ENCODE measurements at regions of chr16 and their contacts with region 1.

Region 1: DNA sequence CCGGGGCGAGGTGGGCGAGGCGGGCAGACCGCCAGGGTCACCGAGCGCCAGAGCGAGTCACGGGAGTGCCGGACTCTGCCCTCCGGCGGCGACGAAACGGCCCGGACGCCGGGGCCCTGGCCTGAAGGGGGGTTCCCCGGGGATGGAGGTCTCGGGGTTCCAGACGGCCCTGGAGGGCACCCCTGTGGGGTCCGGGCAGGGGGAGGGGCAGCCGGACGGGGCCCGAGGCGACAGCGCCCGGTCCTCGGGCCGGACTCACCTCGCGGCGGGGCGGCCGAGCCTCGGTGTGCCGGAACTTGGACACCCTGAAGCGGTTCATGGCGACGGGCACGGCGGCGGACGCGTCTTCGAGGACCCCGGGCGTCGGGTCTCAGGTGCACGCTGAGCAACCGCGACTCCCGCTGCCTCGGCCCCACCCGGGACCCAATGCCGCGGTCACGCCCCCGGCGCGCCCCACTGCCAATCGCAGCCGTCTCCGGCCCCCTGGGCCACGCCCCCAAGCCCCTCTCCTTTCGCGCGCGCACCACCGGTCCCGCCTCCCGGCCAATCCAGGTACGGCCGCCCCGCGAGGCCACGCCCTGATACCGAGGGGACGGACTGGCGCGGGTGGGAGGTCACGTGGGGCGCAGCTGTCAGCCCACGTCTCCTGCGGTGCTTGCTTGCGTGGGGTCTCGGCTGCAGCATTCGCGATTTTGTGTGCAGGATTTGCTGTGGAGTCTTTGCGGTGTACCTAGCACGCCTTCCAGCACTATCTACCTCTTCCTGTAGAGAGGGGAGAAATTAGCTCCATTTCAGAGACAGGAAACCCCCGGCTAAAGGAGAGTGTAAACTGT is at the start of gene CORO7:
- DNase-seq: peak; percentile 99 to 100 (median 100)
- H3K4me3 ChIP-seq: peak within 1 kb of the TSS; percentile 75 to 81
- H3K4me3 Mint-ChIP-seq: peak within 1 kb of the TSS; percentile 91 to 99 (median 98)
- H3K27ac ChIP-seq: peak within 1 kb of the TSS; percentile 95
- H3K27ac Mint-ChIP-seq: peak within 1 kb of the TSS; percentile 94 to 100 (median 99)
- H3K4me1 ChIP-seq: peaks cover 38% of the 10 kb centered on the region
- H3K4me1 Mint-ChIP-seq: peaks cover 26 to 49% (median 37%) of the 10 kb centered on the region in 4 donors
- H3K27me3 ChIP-seq: no peaks in the 10 kb centered on the region
- H3K27me3 Mint-ChIP-seq: no peaks in the 10 kb centered on the region
- total RNA-seq, gene CORO7: 176 to 184 TPM

Region 2: DNA sequence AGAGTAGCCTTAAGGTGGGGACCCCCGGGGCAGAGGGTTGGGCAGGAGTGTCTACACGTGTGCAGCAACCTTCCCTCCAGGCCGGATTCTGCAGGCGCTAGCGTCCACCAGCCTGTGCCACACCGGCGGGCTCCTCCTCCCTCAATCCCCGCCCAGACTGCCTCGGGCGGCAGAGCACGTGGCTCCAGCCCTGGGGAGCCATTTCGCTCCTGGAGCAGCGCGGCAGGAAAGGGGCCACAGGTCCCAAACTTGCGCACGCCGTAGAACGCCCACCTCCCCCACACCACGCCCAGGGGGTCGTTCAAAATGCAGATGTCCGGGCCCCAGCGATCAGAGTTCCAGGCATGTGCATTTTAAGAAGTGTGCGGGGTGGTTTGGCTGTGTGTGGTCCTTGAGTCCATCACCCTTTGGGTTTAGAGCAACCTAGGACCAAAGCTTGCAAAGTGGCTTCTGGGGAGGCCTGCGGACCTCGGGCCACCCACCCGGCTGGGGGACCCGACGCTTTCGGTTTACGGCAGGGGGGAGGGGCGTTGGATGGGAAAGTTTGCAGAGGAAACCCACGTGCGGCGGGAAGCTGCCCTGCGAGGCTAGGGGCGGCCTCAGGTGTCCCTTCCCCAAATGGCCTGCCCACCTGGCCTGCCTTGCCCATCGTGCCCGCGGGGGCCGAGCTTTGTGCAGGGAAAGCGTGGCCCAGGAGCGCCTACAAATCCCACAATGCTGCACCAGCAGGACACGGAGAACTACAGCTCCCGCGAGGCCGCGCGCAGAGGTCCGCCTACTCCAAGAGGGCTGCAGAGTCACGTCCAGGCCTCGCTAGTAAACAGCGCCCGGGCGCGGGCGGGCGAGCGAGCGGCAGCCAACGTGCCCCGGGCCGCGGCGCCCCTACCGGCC is 145.0 kb before region 1 on chr16:
- CTCF ChIA-PET with region 1: no interaction called
- POLR2A ChIA-PET with region 1: interaction called, 18 read pairs
- intact Hi-C with region 1: loop called (anchors 2 kb)
- DNase-seq: peak; percentile 84 to 94 (median 85)
- H3K4me3 ChIP-seq: peak overlapping the region; percentile 48 to 91
- H3K4me3 Mint-ChIP-seq: peak overlapping the region; percentile 86 to 93 (median 91)
- H3K27ac ChIP-seq: peak overlapping the region; percentile 71
- H3K27ac Mint-ChIP-seq: peak overlapping the region; percentile 72 to 98 (median 91)
- H3K4me1 ChIP-seq: peaks cover 10% of the 10 kb centered on the region
- H3K4me1 Mint-ChIP-seq: peaks cover 6 to 27% (median 14%) of the 10 kb centered on the region in 4 donors
- H3K27me3 ChIP-seq: no peaks in the 10 kb centered on the region
- H3K27me3 Mint-ChIP-seq: no peaks in the 10 kb centered on the region

Region 3: GRCh38 chr16:4330277-4330874 is 86.0 kb before region 1 on chr16:
- CTCF ChIA-PET with region 1: no interaction called
- POLR2A ChIA-PET with region 1: no interaction called
- intact Hi-C with region 1: no loop called
- DNase-seq: peak; percentile 59 to 71 (median 61)
- H3K4me3 ChIP-seq: no peak overlapping the region
- H3K4me3 Mint-ChIP-seq: no peak overlapping the region
- H3K27ac ChIP-seq: no peak overlapping the region
- H3K27ac Mint-ChIP-seq: peak overlapping the region in 1 of 7 donors; percentile 50
- H3K4me1 ChIP-seq: peaks cover 9% of the 10 kb centered on the region
- H3K4me1 Mint-ChIP-seq: peaks cover 0 to 5% (median 1%) of the 10 kb centered on the region in 4 donors
- H3K27me3 ChIP-seq: no peaks in the 10 kb centered on the region
- H3K27me3 Mint-ChIP-seq: no peaks in the 10 kb centered on the region

Region 4: GRCh38 chr16:4371357-4372000 is 44.9 kb before region 1 on chr16 and contains the start of gene VASN:
- CTCF ChIA-PET with region 1: no interaction called
- POLR2A ChIA-PET with region 1: interaction called, 7 read pairs
- intact Hi-C with region 1: loop called (anchors 1 kb)
- DNase-seq: peak; percentile 69 to 78 (median 71)
- H3K4me3 ChIP-seq: peak within 1 kb of the TSS in 1 of 2 donors; percentile 42
- H3K4me3 Mint-ChIP-seq: peak within 1 kb of the TSS; percentile 77 to 90 (median 84)
- H3K27ac ChIP-seq: peak within 1 kb of the TSS; percentile 36
- H3K27ac Mint-ChIP-seq: peak within 1 kb of the TSS; percentile 70 to 93 (median 81)
- H3K4me1 ChIP-seq: peaks cover 40% of the 10 kb centered on the region
- H3K4me1 Mint-ChIP-seq: peaks cover 11 to 54% (median 28%) of the 10 kb centered on the region in 4 donors
- H3K27me3 ChIP-seq: no peaks in the 10 kb centered on the region
- H3K27me3 Mint-ChIP-seq: no peaks in the 10 kb centered on the region
- total RNA-seq, gene VASN: 0.11 to 0.29 TPM

Region 5: GRCh38 chr16:4402439-4403132 is 13.8 kb before region 1 on chr16:
- CTCF ChIA-PET with region 1: interaction called, 50 read pairs
- POLR2A ChIA-PET with region 1: interaction called, 49 read pairs
- intact Hi-C with region 1: no loop called
- DNase-seq: peak; percentile 51 to 63 (median 60)
- H3K4me3 ChIP-seq: no peak overlapping the region
- H3K4me3 Mint-ChIP-seq: peak overlapping the region in 1 of 8 donors; percentile 36
- H3K27ac ChIP-seq: no peak overlapping the region
- H3K27ac Mint-ChIP-seq: peak overlapping the region in 3 of 7 donors; percentile 41 to 87 (median 56)
- H3K4me1 ChIP-seq: no peaks in the 10 kb centered on the region
- H3K4me1 Mint-ChIP-seq: peaks cover 19 to 36% (median 24%) of the 10 kb centered on the region in 4 donors
- H3K27me3 ChIP-seq: no peaks in the 10 kb centered on the region
- H3K27me3 Mint-ChIP-seq: no peaks in the 10 kb centered on the region

Region 6: DNA sequence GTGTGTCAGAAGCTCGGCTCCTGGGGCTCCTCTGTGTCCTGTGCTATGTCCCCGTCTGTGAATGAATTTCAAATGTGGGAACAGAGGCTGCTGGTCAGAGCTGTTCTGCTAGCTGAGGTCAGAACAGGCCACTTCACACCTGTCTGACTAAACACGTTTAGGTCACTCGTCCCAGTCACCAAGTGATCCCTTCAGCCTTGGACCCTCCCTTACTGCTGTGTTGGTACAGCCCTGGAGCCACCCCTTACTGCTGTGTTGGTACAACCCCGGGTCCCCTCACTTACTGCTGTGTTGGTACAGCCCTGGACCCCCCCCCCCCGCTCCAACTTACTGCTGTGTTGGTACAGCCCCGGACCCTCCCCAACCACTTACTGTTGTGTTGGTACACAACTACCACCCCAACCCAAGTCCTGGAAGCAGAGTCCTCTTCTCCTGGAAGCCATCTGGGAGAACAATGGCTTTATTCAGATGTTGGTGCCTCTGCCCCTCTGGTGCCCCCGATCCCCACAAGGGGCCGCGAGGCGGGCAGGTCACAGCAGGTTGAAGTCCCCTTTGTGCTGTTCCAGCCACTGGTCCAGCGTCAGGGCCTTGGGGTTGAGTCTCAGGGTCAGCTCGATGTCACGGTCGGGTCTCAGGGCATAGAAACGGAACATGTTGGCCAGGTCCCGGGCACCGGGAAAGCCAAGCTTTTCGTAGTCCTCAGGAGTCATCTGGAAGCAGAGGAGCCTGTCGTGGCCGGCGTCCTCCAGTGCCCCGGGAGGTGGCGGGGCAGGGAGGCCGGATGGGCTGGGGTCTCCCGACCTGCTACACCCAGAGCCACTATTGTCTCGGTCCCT is 45.1 kb after region 1 on chr16:
- CTCF ChIA-PET with region 1: no interaction called
- POLR2A ChIA-PET with region 1: interaction called, 16 read pairs
- intact Hi-C with region 1: no loop called
- DNase-seq: no peak
- H3K4me3 ChIP-seq: no peak overlapping the region
- H3K4me3 Mint-ChIP-seq: no peak overlapping the region
- H3K27ac ChIP-seq: no peak overlapping the region
- H3K27ac Mint-ChIP-seq: peak overlapping the region in 4 of 7 donors; percentile 42 to 85 (median 54)
- H3K4me1 ChIP-seq: peaks cover 31% of the 10 kb centered on the region
- H3K4me1 Mint-ChIP-seq: peaks cover 21 to 43% (median 21%) of the 10 kb centered on the region in 4 donors
- H3K27me3 ChIP-seq: no peaks in the 10 kb centered on the region
- H3K27me3 Mint-ChIP-seq: no peaks in the 10 kb centered on the region

Region 7: DNA sequence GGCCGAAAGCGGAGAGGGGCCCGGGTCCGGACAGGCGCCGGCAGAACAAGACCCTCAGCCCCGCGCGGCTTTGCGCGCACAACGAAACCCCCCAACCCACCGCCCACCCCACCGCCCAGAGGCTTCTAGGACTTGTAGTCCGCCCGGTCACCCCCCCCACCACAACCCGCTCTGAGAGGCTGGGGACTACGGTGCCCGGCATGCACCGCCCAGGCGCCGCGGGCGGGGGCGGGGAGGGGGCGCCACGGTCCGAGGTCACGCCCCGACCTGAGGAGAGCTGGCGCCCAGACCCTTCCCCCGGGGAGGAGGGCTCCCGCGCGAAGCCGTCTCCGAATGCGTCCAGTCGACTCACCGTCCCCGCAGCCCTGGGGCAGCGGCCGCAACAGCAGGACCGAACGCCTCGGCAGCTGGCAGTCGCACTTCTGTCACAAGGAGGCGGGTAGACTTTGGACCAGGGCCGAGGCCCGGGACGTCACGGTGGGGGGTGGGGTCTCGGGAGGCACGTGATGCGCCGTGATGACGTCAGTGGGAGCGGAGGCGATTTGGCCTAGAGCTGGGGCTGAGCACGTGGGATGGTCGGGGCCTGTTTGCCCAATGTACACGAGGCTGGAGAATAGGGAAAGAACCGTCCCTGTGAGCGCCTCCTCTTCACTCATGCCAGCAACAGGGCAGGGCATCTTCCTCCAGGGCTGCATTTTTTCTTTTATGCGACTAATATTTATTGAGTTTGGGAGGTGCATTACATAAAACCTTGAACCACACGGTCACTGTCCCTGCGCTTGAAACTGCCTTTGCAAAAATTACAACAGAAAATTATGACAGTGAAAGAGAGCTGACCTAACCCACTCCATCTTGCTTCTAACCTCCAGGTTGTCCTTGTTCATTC is 122.2 kb after region 1 on chr16 and contains the start of gene CDIP1:
- CTCF ChIA-PET with region 1: no interaction called
- POLR2A ChIA-PET with region 1: interaction called, 16 read pairs
- intact Hi-C with region 1: no loop called
- DNase-seq: peak; percentile 89 to 94 (median 90)
- H3K4me3 ChIP-seq: peak within 1 kb of the TSS; percentile 69 to 92
- H3K4me3 Mint-ChIP-seq: peak within 1 kb of the TSS; percentile 82 to 89 (median 84)
- H3K27ac ChIP-seq: peak within 1 kb of the TSS; percentile 77
- H3K27ac Mint-ChIP-seq: peak within 1 kb of the TSS; percentile 89 to 97 (median 94)
- H3K4me1 ChIP-seq: peaks cover 30% of the 10 kb centered on the region
- H3K4me1 Mint-ChIP-seq: peaks cover 18 to 35% (median 27%) of the 10 kb centered on the region in 4 donors
- H3K27me3 ChIP-seq: no peaks in the 10 kb centered on the region
- H3K27me3 Mint-ChIP-seq: no peaks in the 10 kb centered on the region
- total RNA-seq, gene CDIP1: 19.0 to 21.1 TPM

Measured in CD4-positive, alpha-beta memory T cell (primary cell).